ENCODE measurements at regions of chr17 and their contacts with region 1.

Region 1: DNA sequence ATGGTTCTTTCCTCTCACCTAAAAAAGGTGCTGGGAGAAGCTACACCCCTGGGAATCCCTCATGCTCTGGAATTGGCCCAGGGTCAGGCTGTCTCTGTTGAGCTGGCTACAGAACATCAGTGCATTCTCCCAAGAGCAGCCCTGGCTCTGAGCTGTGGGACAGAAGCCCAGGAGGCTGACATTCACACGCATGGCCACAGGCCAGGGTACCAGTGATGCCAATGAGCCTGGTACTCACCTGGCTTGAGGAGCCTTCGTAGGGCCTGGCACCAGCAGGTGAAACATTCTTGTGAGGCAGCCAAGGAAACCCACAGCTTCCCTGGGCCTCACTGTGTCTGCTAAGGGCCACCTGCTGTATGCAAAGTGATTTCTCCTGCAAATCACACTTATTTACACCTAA is 121.7 kb upstream of the CCL2 start:
- DNase-seq: peak; percentile 62
- ATAC-seq: peak; percentile 83

Region 2: DNA sequence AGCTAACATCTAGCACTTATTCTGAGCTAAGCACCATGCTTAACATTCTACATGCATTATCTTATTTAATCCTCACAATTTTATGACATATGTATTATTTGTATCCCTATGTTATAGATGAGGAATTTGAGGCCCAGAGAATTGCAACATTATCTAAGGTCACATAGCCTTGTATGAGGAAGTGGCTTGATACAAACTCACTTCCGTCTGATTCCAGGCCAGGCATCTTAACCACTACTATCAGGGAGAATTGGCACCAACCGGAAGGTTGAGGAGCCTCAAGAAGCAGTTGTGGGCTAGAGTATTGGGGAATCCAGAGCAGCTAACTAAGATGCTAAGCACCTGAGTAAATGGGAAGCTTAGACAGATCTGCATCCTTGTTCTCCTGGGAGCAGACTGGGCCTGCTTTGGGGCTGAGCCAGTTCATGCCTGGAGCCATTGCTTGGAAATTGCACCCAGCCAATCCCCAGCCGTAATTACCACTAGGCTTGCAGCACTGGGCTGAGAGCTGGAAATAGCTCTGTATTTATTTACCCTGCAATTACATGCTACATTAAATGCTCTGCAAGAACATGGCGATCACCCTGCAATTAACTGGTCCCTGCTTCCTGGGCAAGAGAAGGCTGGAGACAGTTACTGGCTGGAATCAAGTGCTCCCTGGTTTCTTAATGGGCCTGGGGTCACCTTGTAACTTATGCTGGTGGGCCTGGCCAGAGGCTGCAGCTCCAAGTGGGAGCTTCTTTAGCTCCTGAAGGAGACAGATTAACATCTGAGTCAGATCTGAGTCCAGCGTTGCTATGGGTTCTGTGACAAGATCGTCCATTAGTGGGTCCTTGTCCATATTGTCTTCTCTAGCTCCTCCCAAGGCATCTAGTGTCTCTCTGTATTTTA is 151.4 kb before region 1 on chr17:
- intact Hi-C with region 1: loop called (anchors 5 kb)
- DNase-seq: no peak
- ATAC-seq: no peak

Region 3: DNA sequence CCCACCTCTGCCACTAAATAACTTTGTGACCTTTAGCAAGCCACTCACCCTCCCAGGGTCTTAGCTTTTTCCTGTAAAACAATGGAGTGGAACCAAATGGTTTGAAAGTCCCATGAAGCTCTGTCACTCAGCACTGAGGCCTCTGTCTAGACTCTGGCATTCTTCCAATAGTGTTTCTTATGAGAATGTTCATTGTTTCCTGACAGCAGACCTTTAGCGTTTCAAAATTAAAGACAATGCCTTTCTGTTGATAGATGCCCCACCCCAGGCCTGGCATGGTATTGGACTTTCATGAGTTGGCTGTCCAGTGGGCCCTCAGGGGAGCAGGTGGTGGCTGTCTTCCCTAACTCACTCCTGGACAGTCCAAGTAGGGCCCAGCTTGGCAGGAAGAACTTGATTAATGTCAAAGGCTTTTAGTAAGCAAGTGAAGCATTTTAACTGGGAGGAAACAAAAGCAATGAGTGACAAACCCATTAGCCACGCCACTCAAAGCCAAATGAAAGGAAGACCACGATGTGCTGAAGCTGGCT is 64.8 kb before region 1 on chr17:
- intact Hi-C with region 1: no loop called
- DNase-seq: no peak
- ATAC-seq: no peak

Measured in Right ventricle myocardium inferior (tissue), 1 donor.